ENCODE measurements at regions of chr4 and their contacts with region 1.

Region 1: DNA sequence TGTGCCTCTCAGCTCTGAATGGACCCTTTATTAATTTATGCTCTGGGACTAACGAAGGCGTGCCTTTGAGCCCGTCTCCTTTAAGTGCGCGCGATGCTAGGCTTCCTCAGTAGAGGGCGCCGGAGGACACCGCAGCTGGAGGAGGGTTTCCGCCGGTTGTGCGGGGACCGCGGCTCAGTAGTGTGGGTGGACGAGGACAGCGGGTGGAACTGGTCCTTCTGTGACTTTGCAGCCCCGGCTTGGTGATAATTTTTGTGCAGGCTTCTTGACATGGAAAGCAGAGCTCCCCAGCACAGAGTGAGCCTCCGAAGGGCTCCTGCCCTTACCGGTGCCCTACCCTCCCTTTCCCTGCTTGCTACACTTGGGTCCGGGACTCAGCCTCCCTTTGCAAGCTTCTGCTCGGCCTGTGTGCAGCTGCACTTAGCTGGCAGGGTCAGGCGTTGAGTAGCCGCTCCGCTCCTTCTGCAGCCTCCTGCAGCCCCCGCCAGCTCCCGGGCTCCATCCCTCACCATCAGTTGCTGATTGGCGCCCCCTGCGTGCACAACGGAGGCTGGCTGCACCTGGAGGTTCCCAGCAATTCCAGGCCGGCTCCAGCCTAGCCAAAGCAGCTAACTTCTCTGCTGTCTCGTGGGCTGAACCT is 26.8 kb upstream of the BOD1L1 start:
- DNase-seq: peak; percentile 58 to 85 (median 77)
- ATAC-seq: peak; percentile 95
- H3K4me3 ChIP-seq: peak overlapping the region; percentile 54 to 65
- H3K4me3 Mint-ChIP-seq: peak overlapping the region; percentile 87
- H3K27ac ChIP-seq: no peak overlapping the region
- H3K27ac Mint-ChIP-seq: no peak overlapping the region
- H3K4me1 ChIP-seq: peaks cover 4% of the 10 kb centered on the region
- H3K4me1 Mint-ChIP-seq: peaks cover 16% of the 10 kb centered on the region
- H3K27me3 ChIP-seq: no peaks in the 10 kb centered on the region
- H3K27me3 Mint-ChIP-seq: peaks cover 12% of the 10 kb centered on the region
- CTCF ChIP-seq: peak; percentile 80

Region 2: DNA sequence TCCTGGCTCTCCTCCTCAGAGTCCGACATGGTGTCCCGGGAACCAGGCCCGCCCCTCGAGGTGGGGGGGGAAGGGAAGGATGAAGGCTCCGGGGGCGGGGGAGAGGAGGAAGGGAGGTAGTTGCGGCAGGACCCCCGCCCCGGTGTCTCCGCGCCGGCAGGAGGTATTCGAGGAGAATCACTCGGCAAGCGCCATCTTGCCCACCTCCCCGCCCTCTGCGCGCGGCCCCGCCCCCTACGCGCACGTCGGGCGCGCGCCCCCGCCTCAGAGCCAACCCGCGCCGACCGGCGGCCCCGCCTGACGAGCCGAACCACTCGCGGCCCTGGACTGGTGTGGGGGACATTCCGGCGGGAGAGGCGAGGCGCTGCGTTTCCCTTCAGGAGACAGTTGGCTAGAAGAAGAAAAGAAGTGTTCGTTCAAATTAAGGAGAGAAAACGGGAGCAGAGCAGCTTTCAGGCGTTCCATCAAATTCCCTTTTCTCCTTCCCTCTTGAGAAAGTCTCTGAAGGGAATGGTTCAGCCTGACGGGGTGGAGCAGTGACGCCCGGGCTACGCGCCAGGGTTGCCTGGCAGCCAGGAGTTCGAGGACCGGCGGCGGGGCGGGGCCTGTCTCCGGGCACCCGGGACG is 170.0 kb before region 1 on chr4 and contains the start of gene RAB28:
- CTCF ChIA-PET with region 1: interaction called, 5 read pairs
- POLR2A ChIA-PET with region 1: no interaction called
- intact Hi-C with region 1: loop called in 1 of 2 experiments (anchors 1 kb)
- DNase-seq: peak; percentile 86 to 96 (median 93)
- ATAC-seq: peak; percentile 88
- H3K4me3 ChIP-seq: peak within 1 kb of the TSS; percentile 84 to 96
- H3K4me3 Mint-ChIP-seq: peak within 1 kb of the TSS; percentile 84
- H3K27ac ChIP-seq: peak within 1 kb of the TSS; percentile 99
- H3K27ac Mint-ChIP-seq: peak within 1 kb of the TSS; percentile 100
- H3K4me1 ChIP-seq: peaks cover 15% of the 10 kb centered on the region
- H3K4me1 Mint-ChIP-seq: peaks cover 26% of the 10 kb centered on the region
- H3K27me3 ChIP-seq: no peaks in the 10 kb centered on the region
- H3K27me3 Mint-ChIP-seq: peaks cover 15% of the 10 kb centered on the region
- CTCF ChIP-seq: no peak
- total RNA-seq, gene RAB28: 4.2 to 4.6 TPM

Region 3: DNA sequence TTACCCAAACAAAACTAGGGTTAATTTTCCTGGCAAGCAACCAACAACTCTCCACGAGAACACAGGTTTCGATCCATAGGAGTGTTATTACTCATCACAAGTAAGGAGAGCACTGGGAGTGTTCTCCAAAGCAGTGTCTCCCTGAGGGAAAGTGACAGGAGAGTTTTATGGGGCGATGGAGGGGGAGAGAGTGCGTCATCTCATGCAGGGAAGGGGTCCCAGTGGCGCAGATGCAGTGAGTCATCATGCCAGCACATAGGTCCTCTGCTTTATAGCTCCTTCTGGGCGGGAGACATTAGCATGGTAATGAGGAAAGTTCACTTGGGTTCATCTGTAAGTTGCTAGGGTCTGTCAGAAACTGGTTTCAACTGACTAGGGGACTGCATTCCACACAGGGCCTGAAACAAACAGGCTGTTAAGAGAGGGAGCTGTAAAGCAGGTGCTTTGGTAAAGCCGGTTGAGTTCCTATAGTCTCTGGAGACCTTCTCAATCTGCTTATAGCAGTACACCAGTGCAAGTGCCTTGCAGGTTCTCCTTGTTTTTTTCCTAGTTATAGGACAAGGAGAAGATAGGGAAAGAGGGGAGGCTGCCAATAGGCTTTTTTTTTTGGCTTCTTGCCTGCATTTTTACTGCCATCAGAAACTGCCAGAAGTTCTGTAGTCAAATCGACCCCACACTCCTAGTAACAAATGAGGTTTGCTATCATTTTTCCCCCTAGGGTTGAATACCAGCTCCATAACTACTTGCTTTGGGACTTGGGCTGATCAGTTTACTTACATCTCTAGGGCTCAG is 13.9 kb before region 1 on chr4:
- CTCF ChIA-PET with region 1: interaction called, 65 read pairs
- POLR2A ChIA-PET with region 1: interaction called, 3 read pairs
- intact Hi-C with region 1: no loop called
- DNase-seq: no peak
- ATAC-seq: no peak
- H3K4me3 ChIP-seq: no peak overlapping the region
- H3K4me3 Mint-ChIP-seq: no peak overlapping the region
- H3K27ac ChIP-seq: no peak overlapping the region
- H3K27ac Mint-ChIP-seq: no peak overlapping the region
- H3K4me1 ChIP-seq: no peaks in the 10 kb centered on the region
- H3K4me1 Mint-ChIP-seq: no peaks in the 10 kb centered on the region
- H3K27me3 ChIP-seq: no peaks in the 10 kb centered on the region
- H3K27me3 Mint-ChIP-seq: peaks cover 17% of the 10 kb centered on the region
- CTCF ChIP-seq: no peak

Region 4: GRCh38 chr4:13966231-13967195 is 312.2 kb after region 1 on chr4:
- CTCF ChIA-PET with region 1: no interaction called
- POLR2A ChIA-PET with region 1: no interaction called
- intact Hi-C with region 1: no loop called
- DNase-seq: no peak
- ATAC-seq: no peak
- H3K4me3 ChIP-seq: no peak overlapping the region
- H3K4me3 Mint-ChIP-seq: no peak overlapping the region
- H3K27ac ChIP-seq: no peak overlapping the region
- H3K27ac Mint-ChIP-seq: no peak overlapping the region
- H3K4me1 ChIP-seq: no peaks in the 10 kb centered on the region
- H3K4me1 Mint-ChIP-seq: no peaks in the 10 kb centered on the region
- H3K27me3 ChIP-seq: no peaks in the 10 kb centered on the region
- H3K27me3 Mint-ChIP-seq: no peaks in the 10 kb centered on the region
- CTCF ChIP-seq: no peak

Region 5: GRCh38 chr4:14787894-14788293 is 1133.6 kb after region 1 on chr4:
- CTCF ChIA-PET with region 1: interaction called, 3 read pairs
- POLR2A ChIA-PET with region 1: no interaction called
- intact Hi-C with region 1: loop called in 1 of 2 experiments (anchors 10 kb)
- DNase-seq: peak in 1 of 9 experiments; percentile 14
- ATAC-seq: no peak
- H3K4me3 ChIP-seq: no peak overlapping the region
- H3K4me3 Mint-ChIP-seq: no peak overlapping the region
- H3K27ac ChIP-seq: no peak overlapping the region
- H3K27ac Mint-ChIP-seq: no peak overlapping the region
- H3K4me1 ChIP-seq: no peaks in the 10 kb centered on the region
- H3K4me1 Mint-ChIP-seq: no peaks in the 10 kb centered on the region
- H3K27me3 ChIP-seq: no peaks in the 10 kb centered on the region
- H3K27me3 Mint-ChIP-seq: peaks cover 10% of the 10 kb centered on the region
- CTCF ChIP-seq: no peak

Region 6: GRCh38 chr4:15231265-15232091 is 1577.2 kb after region 1 on chr4:
- CTCF ChIA-PET with region 1: interaction called, 3 read pairs
- POLR2A ChIA-PET with region 1: no interaction called
- intact Hi-C with region 1: loop called in 1 of 2 experiments (anchors 2 kb)
- DNase-seq: peak; percentile 38 to 83 (median 71)
- ATAC-seq: peak; percentile 81
- H3K4me3 ChIP-seq: no peak overlapping the region
- H3K4me3 Mint-ChIP-seq: no peak overlapping the region
- H3K27ac ChIP-seq: no peak overlapping the region
- H3K27ac Mint-ChIP-seq: no peak overlapping the region
- H3K4me1 ChIP-seq: peaks cover 29% of the 10 kb centered on the region
- H3K4me1 Mint-ChIP-seq: peaks cover 31% of the 10 kb centered on the region
- H3K27me3 ChIP-seq: no peaks in the 10 kb centered on the region
- H3K27me3 Mint-ChIP-seq: no peaks in the 10 kb centered on the region
- CTCF ChIP-seq: peak; percentile 71

Region 7: GRCh38 chr4:15649914-15650545 is 1995.8 kb after region 1 on chr4:
- CTCF ChIA-PET with region 1: no interaction called
- POLR2A ChIA-PET with region 1: no interaction called
- intact Hi-C with region 1: loop called (anchors 1 to 2 kb)
- DNase-seq: peak; percentile 16 to 89 (median 63)
- ATAC-seq: peak; percentile 82
- H3K4me3 ChIP-seq: no peak overlapping the region
- H3K4me3 Mint-ChIP-seq: peak overlapping the region; percentile 48
- H3K27ac ChIP-seq: no peak overlapping the region
- H3K27ac Mint-ChIP-seq: peak overlapping the region; percentile 56
- H3K4me1 ChIP-seq: peaks cover 62% of the 10 kb centered on the region
- H3K4me1 Mint-ChIP-seq: peaks cover 76% of the 10 kb centered on the region
- H3K27me3 ChIP-seq: no peaks in the 10 kb centered on the region
- H3K27me3 Mint-ChIP-seq: no peaks in the 10 kb centered on the region
- CTCF ChIP-seq: peak; percentile 70